Activated B cell treated with CpG ODN at 0.5 μM for 24 hours (primary cell): ENCODE measurements at regions of chr11 and their contacts with region 1.

Region 1: DNA sequence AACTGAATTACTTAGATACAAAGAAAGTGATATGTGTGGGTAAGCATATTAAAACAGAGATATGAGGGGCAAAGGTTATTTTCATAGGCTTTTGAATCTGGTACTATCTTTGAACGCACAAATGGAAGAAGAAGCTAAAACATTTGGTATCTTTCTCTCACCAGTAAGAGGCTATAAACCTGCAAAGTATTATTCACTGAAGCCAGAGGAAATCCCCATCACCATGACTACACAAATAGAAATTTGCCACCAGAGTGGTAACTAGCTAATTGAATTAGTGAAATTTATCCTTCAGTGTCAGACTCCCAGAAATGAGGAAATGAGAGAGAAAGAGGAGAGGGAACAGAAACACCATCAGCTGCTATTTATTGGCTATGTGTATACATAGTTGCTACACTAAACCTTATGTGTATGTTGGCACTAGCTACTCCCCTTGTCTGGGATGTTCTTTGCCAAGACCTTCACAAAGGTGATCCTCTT is 503.4 kb downstream of the DLG2 start:
- DNase-seq: no peak
- ATAC-seq: peak; percentile 92
- H3K4me3 Mint-ChIP-seq: peak overlapping the region; percentile 47
- H3K27ac Mint-ChIP-seq: peak overlapping the region; percentile 86
- H3K4me1 Mint-ChIP-seq: peaks cover 20% of the 10 kb centered on the region
- H3K27me3 Mint-ChIP-seq: no peaks in the 10 kb centered on the region
- CTCF ChIP-seq: no peak

Region 2: GRCh38 chr11:85044911-85045310 is 78.9 kb before region 1 on chr11:
- CTCF ChIA-PET with region 1: no interaction called
- POLR2A ChIA-PET with region 1: no interaction called
- intact Hi-C with region 1: no loop called
- DNase-seq: no peak
- ATAC-seq: no peak
- H3K4me3 Mint-ChIP-seq: no peak overlapping the region
- H3K27ac Mint-ChIP-seq: no peak overlapping the region
- H3K4me1 Mint-ChIP-seq: no peaks in the 10 kb centered on the region
- H3K27me3 Mint-ChIP-seq: no peaks in the 10 kb centered on the region
- CTCF ChIP-seq: no peak

Region 3: DNA sequence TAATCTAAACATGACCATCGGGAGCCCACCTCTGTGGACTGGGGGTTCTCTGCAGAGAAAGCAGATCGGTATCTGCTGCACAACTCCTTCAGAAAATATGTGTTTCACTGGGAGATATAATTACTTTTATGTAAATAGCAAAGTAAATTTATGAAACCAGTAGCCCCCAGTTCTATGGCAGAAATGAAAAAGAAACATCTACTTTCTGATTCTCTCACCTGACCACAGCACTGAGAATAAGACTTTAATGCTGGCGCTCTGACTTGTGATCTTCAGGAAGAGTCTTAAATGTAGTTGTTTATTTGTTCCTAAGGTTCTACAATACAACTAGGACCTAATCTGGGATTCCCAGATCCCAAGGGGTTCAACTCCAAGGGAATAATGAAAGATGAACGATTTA is 14.7 kb before region 1 on chr11:
- CTCF ChIA-PET with region 1: no interaction called
- POLR2A ChIA-PET with region 1: no interaction called
- intact Hi-C with region 1: loop called (anchors 2 kb)
- DNase-seq: no peak
- ATAC-seq: no peak
- H3K4me3 Mint-ChIP-seq: peak overlapping the region; percentile 56
- H3K27ac Mint-ChIP-seq: peak overlapping the region; percentile 86
- H3K4me1 Mint-ChIP-seq: peaks cover 43% of the 10 kb centered on the region
- H3K27me3 Mint-ChIP-seq: no peaks in the 10 kb centered on the region
- CTCF ChIP-seq: no peak

Region 4: DNA sequence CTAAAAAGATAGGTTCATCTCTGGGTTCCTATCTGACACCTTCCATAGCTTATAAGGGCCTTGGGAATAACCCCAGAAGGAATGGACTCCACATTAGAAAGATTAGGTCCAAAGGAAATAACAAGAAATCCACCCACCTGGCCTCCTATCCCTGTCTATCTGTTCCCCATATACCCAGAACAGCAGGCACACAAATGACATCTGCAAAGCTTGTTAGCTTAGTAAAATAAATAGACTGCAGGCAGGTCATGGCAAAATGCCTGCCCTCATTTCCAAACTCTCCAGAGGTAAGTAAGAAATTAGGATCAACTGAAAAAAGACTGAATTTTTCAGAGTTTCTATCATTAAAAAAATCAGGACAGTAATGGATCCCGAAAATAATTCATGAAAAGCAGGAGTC is 13.8 kb after region 1 on chr11:
- CTCF ChIA-PET with region 1: no interaction called
- POLR2A ChIA-PET with region 1: no interaction called
- intact Hi-C with region 1: no loop called
- DNase-seq: no peak
- ATAC-seq: no peak
- H3K4me3 Mint-ChIP-seq: no peak overlapping the region
- H3K27ac Mint-ChIP-seq: no peak overlapping the region
- H3K4me1 Mint-ChIP-seq: no peaks in the 10 kb centered on the region
- H3K27me3 Mint-ChIP-seq: no peaks in the 10 kb centered on the region
- CTCF ChIP-seq: no peak

Region 5: GRCh38 chr11:85316967-85317366 is 193.2 kb after region 1 on chr11:
- CTCF ChIA-PET with region 1: no interaction called
- POLR2A ChIA-PET with region 1: no interaction called
- intact Hi-C with region 1: loop called (anchors 5 kb)
- DNase-seq: no peak
- ATAC-seq: peak; percentile 95
- H3K4me3 Mint-ChIP-seq: peak overlapping the region; percentile 47
- H3K27ac Mint-ChIP-seq: peak overlapping the region; percentile 80
- H3K4me1 Mint-ChIP-seq: peaks cover 59% of the 10 kb centered on the region
- H3K27me3 Mint-ChIP-seq: no peaks in the 10 kb centered on the region
- CTCF ChIP-seq: no peak